SK-N-SH (cell line): ENCODE measurements at regions of chr15 and their contacts with region 1.

Region 1: GRCh38 chr15:76139368-76140073 is 79.7 kb downstream of the TMEM266 start:
- DNase-seq: peak; percentile 81
- H3K4me3 ChIP-seq: peak overlapping the region in 1 of 2 experiments; percentile 46; a peak in 1 of 4 replicates
- H3K27ac ChIP-seq: no peak overlapping the region
- H3K4me1 ChIP-seq: peaks cover 0 to 2% of the 10 kb centered on the region in 2 experiments; a peak in 1 of 4 replicates
- H3K27me3 ChIP-seq: peaks cover 2% of the 10 kb centered on the region; the same call in 1 of the 2 replicates
- CTCF ChIP-seq: peak; percentile 83
- EP300 ChIP-seq: no peak
- RAD21 ChIP-seq: peak; percentile 89

Region 2: DNA sequence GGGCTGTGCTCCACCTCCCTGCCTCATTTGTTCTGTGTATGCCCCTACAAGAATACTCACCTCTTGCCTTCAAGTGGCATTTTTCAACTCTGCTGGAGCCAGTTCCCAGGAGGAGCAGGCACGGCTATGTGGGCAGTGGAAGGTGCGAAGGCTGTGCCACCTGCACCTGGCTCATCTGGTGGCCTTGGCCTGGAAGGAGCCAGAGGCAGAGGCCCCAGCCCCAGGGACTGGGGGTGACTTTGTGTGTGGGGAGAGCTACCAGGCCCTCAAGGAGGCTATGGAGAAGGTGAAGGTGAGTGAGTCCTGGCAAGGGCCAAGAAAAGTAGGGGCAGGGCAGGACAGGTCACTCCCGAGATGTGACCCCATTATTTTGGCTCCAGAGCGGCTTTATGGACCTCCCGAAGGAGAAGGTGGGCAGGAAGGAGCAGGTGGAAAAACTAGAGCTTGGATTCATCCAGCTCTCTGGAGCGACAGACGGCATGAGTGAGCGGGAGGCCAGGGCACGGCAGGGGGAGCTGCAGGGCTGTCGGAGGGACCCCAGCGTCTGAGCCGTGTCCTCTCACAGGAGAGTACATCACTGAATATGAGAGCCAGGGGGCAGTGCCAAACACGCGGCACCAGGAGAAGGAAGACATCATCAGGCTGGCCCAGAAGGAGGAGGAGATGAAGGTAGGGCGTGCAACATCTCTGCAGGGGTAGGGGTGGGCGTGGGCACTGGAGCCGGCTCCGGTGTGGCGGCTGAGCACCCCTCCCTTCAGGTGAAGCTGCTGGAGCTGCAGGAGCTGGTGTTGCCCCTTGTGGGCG is 353.5 kb before region 1 on chr15:
- CTCF ChIA-PET with region 1: interaction called, 33 read pairs
- POLR2A ChIA-PET with region 1: no interaction called
- DNase-seq: peak; percentile 86
- H3K4me3 ChIP-seq: peak overlapping the region in 1 of 2 experiments; percentile 47; a peak in 3 of 4 replicates
- H3K27ac ChIP-seq: no peak overlapping the region
- H3K4me1 ChIP-seq: peaks cover 0 to 3% of the 10 kb centered on the region in 2 experiments; a peak in 1 of 4 replicates
- H3K27me3 ChIP-seq: peaks cover 49% of the 10 kb centered on the region
- CTCF ChIP-seq: peak; percentile 46
- EP300 ChIP-seq: no peak
- RAD21 ChIP-seq: peak; percentile 82

Region 3: DNA sequence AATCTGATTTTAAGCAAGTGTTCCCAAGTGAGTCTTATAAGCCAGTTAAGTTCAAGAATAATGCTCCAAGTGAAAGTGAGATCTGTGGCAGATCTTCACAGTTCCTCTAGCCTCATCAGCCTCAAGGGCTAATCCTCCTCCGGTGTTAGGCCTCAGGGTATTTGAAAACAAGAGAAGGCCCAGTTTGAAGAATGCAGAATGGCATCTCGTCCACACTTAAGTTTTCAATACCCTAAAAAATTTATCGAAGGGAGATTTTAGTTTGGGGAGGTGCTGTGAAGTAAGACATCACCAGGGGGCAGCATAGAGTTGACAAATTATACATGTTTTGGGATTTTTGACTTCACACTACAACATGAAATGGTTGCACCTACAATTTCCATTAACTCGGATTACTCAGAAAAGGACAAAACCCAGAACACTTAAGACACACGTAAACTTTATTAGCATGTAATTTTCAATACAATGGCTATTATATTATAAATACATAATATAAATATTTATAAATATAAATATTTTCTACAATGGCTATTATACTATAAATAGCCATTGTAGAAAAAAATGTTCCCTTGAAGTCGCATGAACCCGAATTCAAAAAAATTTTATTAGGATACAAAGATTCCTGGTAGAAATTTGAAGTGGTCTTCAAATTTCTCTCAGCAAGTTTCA is 82.1 kb before region 1 on chr15:
- CTCF ChIA-PET with region 1: interaction called, 322 read pairs
- POLR2A ChIA-PET with region 1: interaction called, 5 read pairs
- DNase-seq: peak; percentile 59
- H3K4me3 ChIP-seq: peak overlapping the region in 1 of 2 experiments; percentile 55; a peak in 1 of 4 replicates
- H3K27ac ChIP-seq: no peak overlapping the region
- H3K4me1 ChIP-seq: peaks cover 5 to 11% of the 10 kb centered on the region in 2 experiments; a peak in 3 of 4 replicates
- H3K27me3 ChIP-seq: peaks cover 31% of the 10 kb centered on the region
- CTCF ChIP-seq: peak; percentile 81
- EP300 ChIP-seq: no peak
- RAD21 ChIP-seq: peak; percentile 68

Region 4: GRCh38 chr15:76115888-76116885 is 23.3 kb before region 1 on chr15:
- CTCF ChIA-PET with region 1: interaction called, 74 read pairs
- POLR2A ChIA-PET with region 1: no interaction called
- DNase-seq: no peak
- H3K4me3 ChIP-seq: no peak overlapping the region
- H3K27ac ChIP-seq: no peak overlapping the region
- H3K4me1 ChIP-seq: no peaks in the 10 kb centered on the region
- H3K27me3 ChIP-seq: no peaks in the 10 kb centered on the region
- CTCF ChIP-seq: no peak
- EP300 ChIP-seq: no peak
- RAD21 ChIP-seq: no peak

Region 5: DNA sequence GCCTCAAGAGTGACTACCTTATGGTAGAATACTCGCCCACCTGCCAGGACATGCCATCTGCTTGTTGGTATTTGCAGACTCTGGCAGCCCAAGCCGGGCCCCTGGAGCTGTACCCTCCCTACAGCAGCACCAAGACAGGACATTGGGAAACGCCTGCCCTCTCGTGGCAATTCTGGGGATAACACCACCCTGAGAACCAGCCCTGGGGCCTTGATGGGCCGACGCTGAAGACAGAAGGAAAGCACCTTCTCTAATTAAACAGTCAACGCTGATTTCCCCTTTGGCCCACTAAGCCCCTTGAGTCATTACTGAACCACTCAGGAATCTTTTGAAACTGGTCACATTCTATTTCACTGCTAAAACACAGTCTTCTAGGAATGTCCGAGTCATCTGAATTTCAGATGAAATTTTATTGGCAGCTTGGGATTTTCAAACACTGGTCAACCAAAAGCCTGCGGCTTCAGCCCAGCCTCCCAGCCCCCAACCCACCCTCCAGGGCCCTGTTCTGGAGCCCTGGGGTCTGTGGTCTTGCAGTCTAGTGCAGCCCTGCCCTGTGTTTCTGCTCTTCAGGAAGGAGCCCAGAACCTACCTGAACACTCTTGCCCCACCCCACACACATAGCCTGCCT is 11.6 kb after region 1 on chr15:
- CTCF ChIA-PET with region 1: interaction called, 279 read pairs
- POLR2A ChIA-PET with region 1: no interaction called
- DNase-seq: peak; percentile 89
- H3K4me3 ChIP-seq: peak overlapping the region in 1 of 2 experiments; percentile 32; a peak in 1 of 4 replicates
- H3K27ac ChIP-seq: no peak overlapping the region; a peak in 1 of 4 replicates
- H3K4me1 ChIP-seq: peaks cover 5 to 6% of the 10 kb centered on the region in 2 experiments; a peak in 1 of 4 replicates
- H3K27me3 ChIP-seq: no peaks in the 10 kb centered on the region; the same call in 1 of the 2 replicates
- CTCF ChIP-seq: peak; percentile 87
- EP300 ChIP-seq: no peak
- RAD21 ChIP-seq: peak; percentile 66

Region 6: DNA sequence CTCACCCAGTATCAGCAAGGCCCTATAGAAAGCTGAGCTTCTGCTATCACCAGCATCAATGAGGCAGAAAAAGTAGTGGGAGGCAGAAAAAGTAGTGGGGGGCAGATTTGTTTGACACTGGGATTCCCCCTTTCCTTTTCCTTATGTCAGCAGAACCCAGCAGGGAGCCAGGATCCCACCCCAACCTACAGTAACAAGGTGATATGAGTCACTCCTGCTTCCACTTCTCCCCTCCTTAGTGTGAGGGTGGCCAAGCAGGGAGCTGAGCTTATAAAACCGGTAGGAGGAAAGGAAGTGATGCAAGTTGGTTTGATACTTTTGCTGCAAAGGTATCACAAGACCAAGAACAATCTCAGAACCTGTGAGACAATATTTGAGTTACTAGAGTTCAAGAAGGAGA is 637.0 kb after region 1 on chr15:
- CTCF ChIA-PET with region 1: no interaction called
- POLR2A ChIA-PET with region 1: no interaction called
- DNase-seq: no peak
- H3K4me3 ChIP-seq: no peak overlapping the region
- H3K27ac ChIP-seq: no peak overlapping the region
- H3K4me1 ChIP-seq: no peaks in the 10 kb centered on the region
- H3K27me3 ChIP-seq: no peaks in the 10 kb centered on the region
- CTCF ChIP-seq: no peak
- EP300 ChIP-seq: no peak
- RAD21 ChIP-seq: no peak